ENCODE measurements at regions of chr6 and their contacts with region 1.

Region 1: GRCh38 chr6:41591859-41592502 is 45.8 kb downstream of the FOXP4 start:
- DNase-seq: peak; percentile 91
- CTCF ChIP-seq: peak; percentile 80

Region 2: DNA sequence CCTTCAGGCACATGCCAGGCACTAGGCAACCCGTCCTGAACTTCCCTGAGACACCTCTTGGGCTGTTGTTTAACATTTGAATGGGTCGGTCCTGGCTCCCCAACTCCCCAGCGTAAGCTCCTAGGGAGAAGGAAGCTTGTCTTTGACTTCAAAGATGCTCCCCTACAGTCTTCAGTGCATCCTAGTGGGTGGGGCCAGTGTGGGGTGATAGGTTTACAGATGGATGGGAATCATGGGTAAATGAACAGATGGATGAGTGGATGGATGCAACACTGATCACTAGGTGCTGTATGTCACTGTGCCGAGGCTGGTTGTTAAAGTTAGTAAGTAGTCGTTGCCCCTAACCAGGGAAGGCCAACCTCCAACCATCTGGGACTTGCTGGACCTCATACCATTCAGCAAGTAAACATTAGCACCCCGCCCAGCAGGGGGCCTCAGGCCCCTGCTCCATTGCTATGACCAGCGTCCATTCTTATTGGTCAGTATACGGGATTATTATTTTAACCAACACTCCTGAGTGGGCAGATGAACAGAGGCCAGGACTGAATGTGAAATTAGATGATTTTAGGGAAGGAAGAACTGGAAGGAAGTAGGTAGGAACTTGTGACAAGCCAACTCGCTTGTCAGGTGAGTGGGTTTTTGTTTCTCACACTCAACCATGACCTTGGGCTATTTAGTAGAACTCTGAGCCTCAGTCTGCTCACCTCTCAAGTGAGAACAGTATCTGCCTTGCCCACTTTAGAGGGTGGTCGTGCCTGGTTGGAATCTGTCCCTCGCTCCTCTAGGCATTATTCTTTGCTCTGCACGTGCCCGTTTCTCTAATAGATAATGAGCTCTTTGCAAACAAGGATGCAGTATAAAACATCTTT is 128.7 kb before region 1 on chr6:
- in situ Hi-C with region 1: loop called (anchors 5 kb)
- DNase-seq: peak; percentile 81
- CTCF ChIP-seq: peak; percentile 79

Region 3: DNA sequence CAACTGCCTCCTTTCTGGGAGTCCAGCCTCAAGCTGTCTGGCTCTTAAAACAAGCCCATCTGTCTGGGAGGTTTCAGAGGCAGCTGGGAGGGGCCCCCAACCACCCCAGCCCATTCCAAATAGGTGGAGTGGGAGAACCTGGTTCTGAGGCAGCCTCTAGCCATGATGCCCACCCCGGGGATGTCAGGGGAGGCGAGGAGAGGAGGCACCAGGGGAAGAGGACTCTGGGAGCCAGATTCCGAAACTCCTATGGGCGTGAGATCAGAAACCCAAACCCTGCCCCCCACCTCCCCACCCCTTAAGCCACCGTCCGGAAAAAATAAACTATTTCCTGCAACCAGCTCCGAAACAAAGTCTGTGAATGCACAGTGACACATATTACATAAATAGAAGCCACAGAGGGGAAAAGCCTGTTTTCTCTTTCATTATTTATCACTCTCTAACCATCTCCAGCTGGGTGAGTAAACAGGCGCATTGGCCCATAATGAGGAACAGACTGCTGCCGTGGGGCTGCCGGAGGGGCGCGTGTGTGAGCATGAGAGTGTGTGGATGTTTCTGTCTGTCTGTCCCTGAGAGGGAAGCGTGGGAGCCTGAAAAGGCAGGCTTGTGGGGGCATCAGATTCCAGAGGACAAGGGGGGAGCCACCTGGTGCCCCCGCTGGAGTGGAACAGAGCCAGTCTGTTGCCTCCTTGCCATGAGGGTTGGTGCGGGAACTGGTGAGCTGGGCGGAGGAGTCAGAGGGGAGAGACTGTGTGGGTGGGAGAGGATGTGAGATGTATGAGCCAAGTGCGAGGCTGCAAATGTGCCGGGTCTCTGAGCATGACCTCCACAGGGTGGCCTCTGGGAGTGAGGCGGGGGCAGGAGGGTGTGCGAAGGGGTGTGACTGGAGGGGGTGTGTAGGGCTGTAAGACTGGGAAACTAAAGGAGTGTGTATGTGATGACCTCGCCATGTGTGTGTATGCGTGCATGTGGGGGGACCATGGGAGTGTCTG is 60.1 kb before region 1 on chr6:
- in situ Hi-C with region 1: no loop called
- DNase-seq: peak; percentile 89
- CTCF ChIP-seq: no peak